Posterior vena cava (tissue), 2 donors: ENCODE measurements at regions of chr1 and their contacts with region 1.

Region 1: GRCh38 chr1:24526940-24527542 is 24.4 kb downstream of the RCAN3 start:
- DNase-seq: no peak

Region 2: GRCh38 chr1:24502709-24503058 is 24.4 kb before region 1 on chr1 and contains the start of gene RCAN3:
- intact Hi-C with region 1: loop called in 1 of 2 experiments (anchors 1 kb)
- DNase-seq: peak; percentile 92
- total RNA-seq, gene RCAN3: 6.0 to 9.9 TPM